ENCODE measurements at regions of chr2 and their contacts with region 1.

Region 1: DNA sequence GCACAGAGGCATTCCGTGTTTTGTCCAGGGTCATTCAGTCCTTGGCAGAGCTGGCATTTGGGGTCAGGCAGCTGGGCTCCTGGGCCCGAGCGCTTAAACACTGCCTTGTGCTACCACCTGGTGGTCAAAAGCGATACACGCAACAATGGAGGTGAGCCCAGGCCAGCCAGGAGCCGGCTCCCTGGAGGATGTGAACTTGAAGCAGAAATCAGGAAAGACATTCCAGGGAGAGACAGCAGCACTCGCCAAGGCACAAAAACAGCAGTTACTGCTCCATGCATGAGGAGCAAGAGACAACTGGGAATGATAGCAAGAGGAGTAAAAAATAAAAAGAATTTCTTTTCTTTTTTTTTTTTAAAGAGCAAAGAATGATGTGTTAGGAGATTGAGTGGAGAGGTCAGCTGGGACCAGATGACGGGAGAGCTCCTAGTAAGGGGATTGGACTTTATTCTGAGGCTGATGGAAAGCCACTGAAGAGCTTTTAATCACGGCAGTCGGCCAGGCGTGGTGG is 20.7 kb downstream of the SCYGR8 start:
- DNase-seq: peak; percentile 86
- H3K4me3 ChIP-seq: no peak overlapping the region; a peak in 1 of 4 replicates
- H3K27ac ChIP-seq: no peak overlapping the region
- H3K4me1 ChIP-seq: no peaks in the 10 kb centered on the region; a peak in 1 of 4 replicates
- H3K27me3 ChIP-seq: no peaks in the 10 kb centered on the region
- CTCF ChIP-seq: peak; percentile 89
- EP300 ChIP-seq: no peak
- RAD21 ChIP-seq: peak; percentile 95

Region 2: GRCh38 chr2:227132986-227133385 is 633.4 kb before region 1 on chr2:
- CTCF ChIA-PET with region 1: interaction called, 20 read pairs
- POLR2A ChIA-PET with region 1: no interaction called
- DNase-seq: no peak
- H3K4me3 ChIP-seq: no peak overlapping the region
- H3K27ac ChIP-seq: no peak overlapping the region
- H3K4me1 ChIP-seq: no peaks in the 10 kb centered on the region
- H3K27me3 ChIP-seq: no peaks in the 10 kb centered on the region
- CTCF ChIP-seq: no peak
- EP300 ChIP-seq: no peak
- RAD21 ChIP-seq: no peak

Region 3: GRCh38 chr2:227406177-227407031 is 360.0 kb before region 1 on chr2:
- CTCF ChIA-PET with region 1: interaction called, 52 read pairs
- POLR2A ChIA-PET with region 1: no interaction called
- DNase-seq: peak; percentile 77
- H3K4me3 ChIP-seq: peak overlapping the region; percentile 13 to 28; a peak in 2 of 4 replicates
- H3K27ac ChIP-seq: peak overlapping the region; percentile 79 to 96
- H3K4me1 ChIP-seq: peaks cover 5 to 20% of the 10 kb centered on the region in 2 experiments; a peak in 2 of 4 replicates
- H3K27me3 ChIP-seq: no peaks in the 10 kb centered on the region
- CTCF ChIP-seq: peak; percentile 89
- EP300 ChIP-seq: peak; percentile 58 to 60; a peak in 3 of 4 replicates
- RAD21 ChIP-seq: peak; percentile 96

Region 4: DNA sequence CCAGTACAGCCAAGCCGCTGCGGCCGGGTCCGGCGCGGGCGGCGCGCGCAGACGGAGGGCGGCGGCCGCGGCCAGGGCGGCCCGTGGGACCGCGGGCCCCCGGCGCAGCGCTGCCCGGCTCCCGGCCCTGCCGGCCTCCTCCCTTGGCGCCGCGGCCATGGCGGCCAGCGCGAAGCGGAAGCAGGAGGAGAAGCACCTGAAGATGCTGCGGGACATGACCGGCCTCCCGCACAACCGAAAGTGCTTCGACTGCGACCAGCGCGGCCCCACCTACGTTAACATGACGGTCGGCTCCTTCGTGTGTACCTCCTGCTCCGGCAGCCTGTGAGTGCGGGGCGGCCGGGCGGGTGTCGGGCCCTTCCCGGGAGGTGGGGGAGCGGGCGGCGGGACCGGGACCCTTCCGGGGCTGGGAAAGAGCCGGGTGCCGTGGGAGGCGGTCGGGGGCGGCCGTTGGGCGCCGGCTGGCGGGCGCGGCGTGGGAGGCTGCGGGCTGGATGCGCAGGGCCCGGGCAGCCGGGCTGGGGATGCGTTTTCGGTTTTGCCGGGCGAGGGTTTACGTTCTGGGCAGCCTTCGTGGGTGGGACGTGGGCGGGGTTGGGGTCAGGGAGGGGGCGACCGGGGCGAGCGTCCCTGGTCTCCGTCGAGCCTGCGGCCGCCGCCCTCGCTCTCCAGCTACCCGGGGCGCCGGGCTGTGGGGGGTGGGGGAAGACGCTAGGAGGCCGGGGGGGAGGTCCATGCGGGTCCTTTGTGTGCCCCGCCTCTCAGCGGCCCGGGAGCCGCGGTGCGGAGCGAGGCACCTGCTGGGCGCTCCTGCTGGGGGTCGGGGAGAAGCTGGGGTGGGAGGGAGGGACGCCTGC is 293.9 kb before region 1 on chr2:
- CTCF ChIA-PET with region 1: interaction called, 11 read pairs
- POLR2A ChIA-PET with region 1: no interaction called
- DNase-seq: peak; percentile 88
- H3K4me3 ChIP-seq: peak overlapping the region; percentile 74 to 87
- H3K27ac ChIP-seq: peak overlapping the region; percentile 68 to 73; a peak in 3 of 4 replicates
- H3K4me1 ChIP-seq: peaks cover 5 to 10% of the 10 kb centered on the region in 2 experiments; a peak in 3 of 4 replicates
- H3K27me3 ChIP-seq: no peaks in the 10 kb centered on the region
- CTCF ChIP-seq: no peak
- EP300 ChIP-seq: no peak
- RAD21 ChIP-seq: no peak

Region 5: DNA sequence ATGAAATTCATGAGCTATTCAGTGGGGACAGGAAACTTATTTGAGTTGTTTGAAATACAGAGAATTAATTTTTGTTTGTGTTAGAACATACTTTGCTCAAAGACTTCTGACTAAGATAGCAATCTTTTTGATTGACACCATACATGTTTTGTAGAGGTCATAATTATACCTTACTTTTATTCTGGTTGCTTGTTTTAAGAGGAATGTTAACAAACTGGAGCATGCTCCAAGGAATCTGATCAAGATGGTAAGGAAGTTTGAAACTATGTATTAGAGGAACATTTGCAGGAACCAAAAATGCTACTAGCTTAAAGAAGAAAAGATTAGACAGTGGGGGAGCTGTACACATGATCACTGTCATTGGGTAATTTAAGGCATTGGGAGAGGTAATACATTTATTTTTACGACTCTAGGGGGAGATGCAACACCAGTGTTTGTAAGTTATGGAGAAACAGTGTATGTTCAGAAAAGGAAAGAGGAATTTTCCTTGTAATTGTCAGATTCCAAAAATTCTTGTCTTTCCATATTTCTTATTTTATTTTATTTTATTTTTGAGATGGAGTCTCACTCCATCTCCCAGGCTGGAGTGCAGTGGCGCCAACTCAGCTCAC is 286.5 kb before region 1 on chr2:
- CTCF ChIA-PET with region 1: interaction called, 14 read pairs
- POLR2A ChIA-PET with region 1: no interaction called
- DNase-seq: peak; percentile 49
- H3K4me3 ChIP-seq: no peak overlapping the region
- H3K27ac ChIP-seq: no peak overlapping the region
- H3K4me1 ChIP-seq: peaks cover 0 to 37% of the 10 kb centered on the region in 2 experiments; a peak in 3 of 4 replicates
- H3K27me3 ChIP-seq: no peaks in the 10 kb centered on the region
- CTCF ChIP-seq: peak; percentile 61
- EP300 ChIP-seq: no peak
- RAD21 ChIP-seq: peak; percentile 74

Region 6: DNA sequence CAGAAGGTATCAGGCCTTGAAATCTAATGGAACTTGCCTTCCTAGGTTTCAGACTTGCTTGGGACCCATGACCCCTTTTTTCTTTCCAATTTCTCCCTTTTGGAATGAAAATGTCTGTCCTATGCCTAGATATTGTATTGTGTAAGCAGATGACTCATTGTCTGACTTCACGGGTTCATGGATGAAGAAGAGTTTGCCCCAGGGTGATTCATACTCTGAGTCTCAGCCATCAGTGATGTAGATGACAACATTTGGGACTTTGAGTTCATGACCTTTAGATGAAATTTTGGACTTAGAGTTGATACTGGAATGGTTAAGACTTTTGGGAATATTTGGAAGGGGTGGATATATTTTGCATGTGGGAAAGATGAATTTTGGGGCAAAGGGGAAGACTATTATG is 111.0 kb before region 1 on chr2:
- CTCF ChIA-PET with region 1: interaction called, 59 read pairs
- POLR2A ChIA-PET with region 1: no interaction called
- DNase-seq: no peak
- H3K4me3 ChIP-seq: no peak overlapping the region
- H3K27ac ChIP-seq: no peak overlapping the region
- H3K4me1 ChIP-seq: no peaks in the 10 kb centered on the region
- H3K27me3 ChIP-seq: no peaks in the 10 kb centered on the region
- CTCF ChIP-seq: no peak
- EP300 ChIP-seq: peak in 1 of 2 experiments; percentile 35; a peak in 1 of 4 replicates
- RAD21 ChIP-seq: no peak

Measured in SK-N-SH (cell line).